H1 (cell line): ENCODE measurements at regions of chr7 and their contacts with region 1.

Region 1: GRCh38 chr7:95669513-95669912 is 73.2 kb upstream of the PDK4 start:
- DNase-seq: no peak
- H3K4me3 ChIP-seq: no peak overlapping the region
- H3K27ac ChIP-seq: no peak overlapping the region
- H3K4me1 ChIP-seq: no peaks in the 10 kb centered on the region
- H3K27me3 ChIP-seq: no peaks in the 10 kb centered on the region
- CTCF ChIP-seq: no peak
- EP300 ChIP-seq: no peak
- POLR2A ChIP-seq: no peak
- RAD21 ChIP-seq: no peak

Region 2: DNA sequence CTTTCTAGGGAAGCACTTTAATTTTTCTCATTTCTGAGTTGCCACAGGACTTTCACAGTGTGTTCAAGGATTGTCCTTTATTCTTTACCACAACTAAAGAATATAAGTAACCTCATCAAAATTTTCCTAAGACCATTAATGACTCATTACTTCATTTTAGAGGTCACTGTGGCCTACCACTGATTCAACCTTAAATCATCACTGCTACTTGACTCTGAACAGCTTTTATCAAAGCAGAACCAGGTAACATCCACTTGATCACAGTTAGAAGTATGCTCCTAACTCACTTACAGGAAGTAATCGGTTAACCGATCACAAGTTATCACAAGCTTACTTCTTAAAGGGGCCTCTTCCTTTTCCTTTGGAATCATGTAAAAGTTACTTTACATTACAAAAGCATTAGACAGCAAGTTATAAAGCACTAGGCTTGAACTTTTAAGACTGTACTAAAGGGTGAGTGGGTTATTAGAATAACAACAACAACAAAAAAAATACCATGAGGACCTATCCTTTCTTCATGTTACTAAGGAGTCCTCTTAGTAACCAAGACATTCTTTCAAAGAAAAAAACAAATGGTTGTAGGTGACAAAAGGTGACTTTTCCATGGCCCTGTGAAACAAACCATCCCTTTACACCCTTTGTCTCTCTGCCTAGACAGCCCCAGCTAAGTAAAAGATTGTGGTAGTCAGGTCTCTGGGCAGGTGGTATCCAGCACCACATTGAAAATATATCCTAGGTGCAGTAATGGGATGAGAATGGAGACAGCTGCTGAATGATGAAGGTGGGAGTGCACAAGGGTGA is 33.2 kb before region 1 on chr7:
- CTCF ChIA-PET with region 1: no interaction called
- POLR2A ChIA-PET with region 1: no interaction called
- DNase-seq: no peak
- H3K4me3 ChIP-seq: no peak overlapping the region
- H3K27ac ChIP-seq: no peak overlapping the region
- H3K4me1 ChIP-seq: peaks cover 0 to 2% (median 1%) of the 10 kb centered on the region in 4 experiments; a peak in 1 of 7 replicates
- H3K27me3 ChIP-seq: no peaks in the 10 kb centered on the region
- CTCF ChIP-seq: no peak
- EP300 ChIP-seq: no peak
- POLR2A ChIP-seq: no peak
- RAD21 ChIP-seq: no peak

Region 3: DNA sequence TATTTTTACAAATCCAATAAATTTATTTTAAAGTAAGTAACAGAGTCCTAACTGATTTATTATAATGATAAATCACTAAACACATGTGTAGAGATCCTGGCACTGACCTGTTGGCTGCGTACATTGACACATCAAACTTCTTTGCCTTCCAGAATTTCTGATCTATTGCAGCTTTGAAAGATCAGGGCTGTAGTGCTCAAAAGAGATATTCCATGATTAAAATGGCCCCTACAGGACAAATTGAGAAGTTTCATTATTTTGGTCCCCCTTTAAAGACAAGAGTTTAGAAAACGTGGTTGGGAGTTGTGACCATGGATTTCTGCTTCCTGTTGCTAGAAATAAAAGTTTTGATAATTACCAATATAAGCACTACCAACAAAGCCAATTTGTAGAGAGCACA is 14.5 kb after region 1 on chr7:
- CTCF ChIA-PET with region 1: interaction called, 34 read pairs
- POLR2A ChIA-PET with region 1: interaction called, 3 read pairs
- DNase-seq: no peak
- H3K4me3 ChIP-seq: no peak overlapping the region
- H3K27ac ChIP-seq: no peak overlapping the region
- H3K4me1 ChIP-seq: no peaks in the 10 kb centered on the region
- H3K27me3 ChIP-seq: no peaks in the 10 kb centered on the region
- CTCF ChIP-seq: peak in 1 of 3 experiments; percentile 31; a peak in 1 of 4 replicates
- EP300 ChIP-seq: no peak
- POLR2A ChIP-seq: no peak
- RAD21 ChIP-seq: peak; percentile 52 to 54

Region 4: DNA sequence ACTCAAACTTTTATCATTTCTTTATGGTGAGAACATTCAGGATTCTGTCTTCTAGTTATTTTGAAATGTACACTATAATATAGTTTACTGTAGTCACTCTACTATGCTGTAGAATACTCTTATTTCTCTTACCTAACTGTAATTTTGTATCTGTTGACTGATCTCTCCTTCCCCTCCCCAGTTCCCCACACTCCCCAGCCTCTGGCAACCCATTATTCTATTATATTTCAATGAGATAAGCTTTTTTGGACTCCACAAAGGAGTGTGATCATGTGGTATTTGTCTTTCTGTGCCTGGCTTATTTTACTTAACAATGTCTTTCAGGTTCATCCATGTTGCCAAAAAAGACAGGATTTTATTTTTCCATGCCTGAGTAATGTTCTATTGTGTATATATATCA is 31.4 kb after region 1 on chr7:
- CTCF ChIA-PET with region 1: no interaction called
- POLR2A ChIA-PET with region 1: no interaction called
- DNase-seq: no peak
- H3K4me3 ChIP-seq: no peak overlapping the region
- H3K27ac ChIP-seq: no peak overlapping the region
- H3K4me1 ChIP-seq: no peaks in the 10 kb centered on the region
- H3K27me3 ChIP-seq: no peaks in the 10 kb centered on the region
- CTCF ChIP-seq: no peak
- EP300 ChIP-seq: no peak
- POLR2A ChIP-seq: no peak
- RAD21 ChIP-seq: no peak